ENCODE measurements at regions of chr11 and their contacts with region 1.

Region 1: DNA sequence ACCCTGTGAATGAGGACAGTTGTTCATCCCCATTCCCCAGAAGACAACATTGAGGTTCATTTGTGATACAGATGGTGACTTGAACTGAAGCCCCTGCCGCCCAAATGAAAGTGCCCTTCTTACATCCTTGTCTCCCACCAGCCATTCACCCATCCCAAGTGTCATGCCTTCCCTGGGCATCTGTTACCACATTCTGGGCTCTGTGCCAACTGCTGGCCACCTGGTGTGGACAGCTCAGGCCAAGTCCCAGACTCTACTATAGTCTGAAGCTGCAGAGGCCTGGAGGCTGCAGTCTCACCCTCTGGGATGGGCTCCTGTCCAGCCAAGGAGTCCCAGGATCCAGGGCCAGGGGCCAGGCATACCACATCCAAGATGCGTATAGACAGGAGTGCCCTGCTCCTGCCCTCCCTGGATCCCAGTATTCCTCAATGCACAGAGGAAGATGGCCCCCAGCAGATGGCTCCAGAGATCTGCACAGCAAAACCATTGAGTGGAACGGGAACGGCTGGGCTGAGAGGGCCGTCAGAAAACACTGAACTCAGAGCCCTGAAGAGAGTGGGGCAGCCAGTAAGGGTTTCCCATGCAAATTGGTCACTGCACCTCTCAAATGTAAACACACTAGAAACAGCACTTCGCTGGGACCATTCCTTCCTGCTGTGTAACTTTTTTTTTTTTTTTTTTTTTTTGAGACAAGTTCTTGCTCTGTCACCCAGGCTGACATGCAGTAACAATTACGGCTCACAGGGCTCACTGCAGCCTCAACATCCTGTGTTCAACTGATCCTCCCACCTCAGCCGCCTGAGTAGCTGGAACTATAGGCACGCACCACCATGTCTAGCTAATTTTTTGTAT is 22.8 kb downstream of the ARRB1 start:
- DNase-seq: no peak
- H3K4me3 ChIP-seq: no peak overlapping the region
- H3K27ac ChIP-seq: peak overlapping the region; percentile 34
- H3K27me3 ChIP-seq: no peaks in the 10 kb centered on the region
- CTCF ChIP-seq: peak; percentile 86

Region 2: DNA sequence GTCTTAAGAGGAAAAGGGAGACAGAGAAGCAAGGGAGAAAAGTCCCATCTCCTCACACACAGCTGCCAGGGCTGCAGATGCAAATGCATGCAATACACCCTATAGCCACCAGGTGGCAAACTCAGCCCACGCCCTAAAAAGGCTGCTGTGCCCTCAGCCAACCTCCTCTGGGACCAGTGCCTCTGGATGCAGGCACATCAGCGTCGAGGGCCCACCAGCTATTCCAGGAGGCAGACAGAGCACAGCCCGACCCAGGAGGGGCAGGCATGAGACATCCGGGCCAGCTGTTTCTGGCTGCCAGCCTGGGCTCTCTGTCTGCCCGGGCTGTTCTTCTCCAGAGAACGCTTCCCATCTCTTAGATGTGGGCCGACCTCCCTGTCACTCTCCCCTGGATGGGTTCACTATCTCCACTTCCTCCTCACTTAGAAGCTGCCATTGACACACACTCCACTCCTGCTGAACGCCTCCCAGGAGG is 48.4 kb before region 1 on chr11:
- CTCF ChIA-PET with region 1: interaction called, 12 read pairs
- POLR2A ChIA-PET with region 1: interaction called, 5 read pairs
- DNase-seq: peak; percentile 55
- H3K4me3 ChIP-seq: no peak overlapping the region
- H3K27ac ChIP-seq: no peak overlapping the region
- H3K27me3 ChIP-seq: no peaks in the 10 kb centered on the region
- CTCF ChIP-seq: peak; percentile 97

Region 3: GRCh38 chr11:75340050-75340409 is 11.4 kb after region 1 on chr11:
- CTCF ChIA-PET with region 1: interaction called, 11 read pairs
- POLR2A ChIA-PET with region 1: interaction called, 11 read pairs
- DNase-seq: no peak
- H3K4me3 ChIP-seq: no peak overlapping the region
- H3K27ac ChIP-seq: peak overlapping the region; percentile 39
- H3K27me3 ChIP-seq: no peaks in the 10 kb centered on the region
- CTCF ChIP-seq: no peak

Measured in AG04450 (cell line).